Transverse colon (tissue), 4 donors: ENCODE measurements at regions of chrX and their contacts with region 1.

Region 1: GRCh38 chrX:42096265-42096920 is 173.0 kb upstream of the CASK start:
- DNase-seq: no peak
- H3K4me3 ChIP-seq: no peak overlapping the region
- H3K27ac ChIP-seq: no peak overlapping the region
- H3K4me1 ChIP-seq: no peaks in the 10 kb centered on the region
- H3K27me3 ChIP-seq: no peaks in the 10 kb centered on the region
- CTCF ChIP-seq: no peak
- EP300 ChIP-seq: no peak
- POLR2A ChIP-seq: no peak

Region 2: DNA sequence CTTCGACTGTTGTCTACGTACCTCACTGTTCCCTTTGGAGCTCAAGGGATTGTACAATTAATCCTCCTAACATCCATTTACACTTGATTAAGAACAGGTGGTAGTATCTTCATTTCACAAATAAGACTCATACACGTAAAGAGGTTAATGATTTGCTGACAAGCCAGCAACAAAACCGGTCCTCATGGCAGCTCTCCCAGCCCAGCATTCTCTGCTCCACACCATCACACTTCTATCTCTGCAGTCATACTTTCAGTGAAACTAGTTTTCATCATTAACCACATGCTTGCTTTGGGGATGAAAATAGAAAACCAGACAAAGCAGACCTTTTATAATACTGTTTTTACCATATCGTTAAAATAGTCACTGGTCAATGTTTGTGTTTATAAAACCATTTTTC is 144.3 kb before region 1 on chrX:
- in situ Hi-C with region 1: no loop called
- intact Hi-C with region 1: no loop called
- DNase-seq: no peak
- H3K4me3 ChIP-seq: no peak overlapping the region
- H3K27ac ChIP-seq: no peak overlapping the region
- H3K4me1 ChIP-seq: peaks cover 0 to under 1% (median 0%) of the 10 kb centered on the region in 4 donors
- H3K27me3 ChIP-seq: no peaks in the 10 kb centered on the region
- CTCF ChIP-seq: no peak
- EP300 ChIP-seq: no peak
- POLR2A ChIP-seq: no peak

Region 3: DNA sequence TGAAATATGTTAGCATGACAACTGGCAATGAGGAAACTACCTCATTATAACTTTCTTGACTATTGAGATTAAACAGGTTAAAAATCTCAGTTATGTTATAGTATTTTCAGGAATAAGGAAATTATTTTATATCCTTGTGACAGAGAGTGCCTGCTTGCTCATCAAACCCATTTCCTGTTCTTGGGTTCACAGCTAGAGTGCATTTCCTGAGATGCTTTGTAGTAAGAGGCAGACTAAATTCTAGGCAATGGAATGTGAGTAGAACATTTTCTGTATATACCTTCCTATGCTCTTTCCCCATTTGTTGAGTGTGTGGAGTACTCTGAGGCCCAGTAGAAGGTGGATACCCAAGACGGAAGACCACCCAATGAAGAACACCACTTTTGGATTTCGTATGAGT is 76.2 kb before region 1 on chrX:
- in situ Hi-C with region 1: no loop called
- intact Hi-C with region 1: no loop called
- DNase-seq: no peak
- H3K4me3 ChIP-seq: no peak overlapping the region
- H3K27ac ChIP-seq: no peak overlapping the region
- H3K4me1 ChIP-seq: no peaks in the 10 kb centered on the region
- H3K27me3 ChIP-seq: no peaks in the 10 kb centered on the region
- CTCF ChIP-seq: no peak
- EP300 ChIP-seq: no peak
- POLR2A ChIP-seq: no peak

Region 4: GRCh38 chrX:42176789-42177188 is 80.4 kb after region 1 on chrX:
- in situ Hi-C with region 1: loop called in 1 of 4 experiments (anchors 25 kb)
- intact Hi-C with region 1: no loop called
- DNase-seq: no peak
- H3K4me3 ChIP-seq: no peak overlapping the region
- H3K27ac ChIP-seq: no peak overlapping the region
- H3K4me1 ChIP-seq: no peaks in the 10 kb centered on the region
- H3K27me3 ChIP-seq: no peaks in the 10 kb centered on the region
- CTCF ChIP-seq: no peak
- EP300 ChIP-seq: no peak
- POLR2A ChIP-seq: no peak

Region 5: GRCh38 chrX:42229533-42229932 is 133.1 kb after region 1 on chrX:
- in situ Hi-C with region 1: no loop called
- intact Hi-C with region 1: no loop called
- DNase-seq: no peak
- H3K4me3 ChIP-seq: no peak overlapping the region
- H3K27ac ChIP-seq: no peak overlapping the region
- H3K4me1 ChIP-seq: no peaks in the 10 kb centered on the region
- H3K27me3 ChIP-seq: no peaks in the 10 kb centered on the region
- CTCF ChIP-seq: no peak
- EP300 ChIP-seq: no peak
- POLR2A ChIP-seq: no peak